Adrenal gland (tissue), 19 donors: ENCODE measurements at regions of chr1 and their contacts with region 1.

Region 1: DNA sequence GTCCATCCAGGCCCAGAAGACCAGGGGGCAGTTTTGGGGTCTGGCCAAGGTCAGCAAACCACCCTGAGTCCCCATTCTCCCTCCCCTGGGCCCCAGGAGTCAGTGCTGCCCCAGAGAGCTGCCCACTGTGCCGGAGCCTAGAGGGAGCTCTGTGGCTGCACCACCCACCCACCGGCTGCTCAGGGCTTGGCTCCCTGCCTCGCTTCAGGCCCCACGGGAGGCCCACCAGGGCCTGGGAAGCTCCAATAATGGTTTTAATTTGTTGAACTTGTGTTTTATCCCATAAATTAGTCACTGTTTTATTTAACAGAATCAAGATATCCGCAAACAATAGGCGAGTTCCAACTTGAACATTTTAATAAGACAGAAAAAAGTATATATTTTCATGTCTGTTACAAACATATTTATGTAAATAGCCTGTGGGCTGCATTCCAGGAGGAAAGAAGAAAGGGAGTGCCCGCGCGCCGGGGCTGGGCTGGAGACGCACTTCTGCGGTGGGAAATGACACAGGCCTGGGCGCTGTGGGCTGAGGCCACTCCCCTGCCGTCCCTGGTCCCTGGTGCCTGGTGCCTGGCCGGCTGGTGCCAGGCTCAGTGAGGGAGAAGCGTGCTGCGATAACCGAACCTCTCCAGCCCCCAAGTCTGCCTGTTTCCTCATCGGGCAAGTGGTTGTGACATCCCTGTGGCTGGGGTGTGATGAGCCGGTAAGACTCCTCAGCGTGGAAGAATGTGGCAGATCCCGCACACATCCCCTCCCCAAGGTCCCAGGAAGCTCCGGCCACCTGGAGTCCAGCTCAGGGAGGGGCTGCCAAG is 160.5 kb downstream of the PEX14 start:
- DNase-seq: no peak
- H3K4me3 ChIP-seq: no peak overlapping the region
- H3K27ac ChIP-seq: peak overlapping the region in 2 of 5 donors; percentile 12 to 20
- H3K4me1 ChIP-seq: no peaks in the 10 kb centered on the region
- H3K27me3 ChIP-seq: no peaks in the 10 kb centered on the region
- CTCF ChIP-seq: no peak
- POLR2A ChIP-seq: no peak

Region 2: GRCh38 chr1:10663678-10664035 is 28.4 kb after region 1 on chr1:
- intact Hi-C with region 1: no loop called
- DNase-seq: peak; percentile 72 to 88 (median 81)
- H3K4me3 ChIP-seq: no peak overlapping the region
- H3K27ac ChIP-seq: peak overlapping the region in 3 of 5 donors; percentile 62 to 82 (median 74)
- H3K4me1 ChIP-seq: peaks cover 11 to 29% of the 10 kb centered on the region in 2 donors
- H3K27me3 ChIP-seq: no peaks in the 10 kb centered on the region
- CTCF ChIP-seq: peak in 2 of 6 experiments; percentile 2 to 4
- POLR2A ChIP-seq: peak in 1 of 2 donors; percentile 50

Region 3: DNA sequence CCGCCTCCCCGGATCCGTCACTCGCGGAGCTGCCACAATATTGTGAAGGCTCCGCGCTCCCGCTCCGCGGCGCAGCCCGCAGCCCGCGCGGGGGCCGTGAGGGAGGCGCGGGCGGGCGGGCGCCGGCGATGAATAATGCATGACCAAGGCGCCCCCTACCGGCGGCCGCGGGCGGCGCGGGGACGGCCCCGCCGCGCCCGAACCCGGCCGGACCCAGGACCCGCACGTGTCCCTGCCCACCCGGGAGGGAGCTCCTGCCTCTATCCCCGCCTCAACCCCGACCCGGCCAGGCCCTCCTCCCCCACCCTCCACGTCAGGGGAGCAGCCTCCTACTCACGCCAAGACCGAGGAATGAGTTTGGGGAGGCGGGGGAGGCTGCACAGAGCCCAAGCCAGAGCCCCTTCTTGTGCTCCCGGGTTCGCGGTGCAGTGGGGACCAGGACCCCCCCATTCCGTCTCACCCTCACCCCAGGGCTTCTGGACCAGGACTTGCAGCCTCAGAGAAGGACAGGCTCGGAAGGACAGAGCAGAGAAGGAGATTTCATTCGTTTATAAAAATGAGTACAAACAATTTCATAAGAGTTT is 231.9 kb after region 1 on chr1:
- intact Hi-C with region 1: loop called in 1 of 2 experiments (anchors 10 kb)
- DNase-seq: peak; percentile 40 to 77 (median 65)
- H3K4me3 ChIP-seq: peak overlapping the region in 1 of 4 donors; percentile 63
- H3K27ac ChIP-seq: no peak overlapping the region
- H3K4me1 ChIP-seq: peaks cover 4% of the 10 kb centered on the region in 2 donors
- H3K27me3 ChIP-seq: peaks cover 12% of the 10 kb centered on the region
- CTCF ChIP-seq: peak in 4 of 6 experiments; percentile 31 to 89 (median 86)
- POLR2A ChIP-seq: no peak